HEK293T (cell line): ENCODE measurements at regions of chr1 and their contacts with region 1.

Region 1: DNA sequence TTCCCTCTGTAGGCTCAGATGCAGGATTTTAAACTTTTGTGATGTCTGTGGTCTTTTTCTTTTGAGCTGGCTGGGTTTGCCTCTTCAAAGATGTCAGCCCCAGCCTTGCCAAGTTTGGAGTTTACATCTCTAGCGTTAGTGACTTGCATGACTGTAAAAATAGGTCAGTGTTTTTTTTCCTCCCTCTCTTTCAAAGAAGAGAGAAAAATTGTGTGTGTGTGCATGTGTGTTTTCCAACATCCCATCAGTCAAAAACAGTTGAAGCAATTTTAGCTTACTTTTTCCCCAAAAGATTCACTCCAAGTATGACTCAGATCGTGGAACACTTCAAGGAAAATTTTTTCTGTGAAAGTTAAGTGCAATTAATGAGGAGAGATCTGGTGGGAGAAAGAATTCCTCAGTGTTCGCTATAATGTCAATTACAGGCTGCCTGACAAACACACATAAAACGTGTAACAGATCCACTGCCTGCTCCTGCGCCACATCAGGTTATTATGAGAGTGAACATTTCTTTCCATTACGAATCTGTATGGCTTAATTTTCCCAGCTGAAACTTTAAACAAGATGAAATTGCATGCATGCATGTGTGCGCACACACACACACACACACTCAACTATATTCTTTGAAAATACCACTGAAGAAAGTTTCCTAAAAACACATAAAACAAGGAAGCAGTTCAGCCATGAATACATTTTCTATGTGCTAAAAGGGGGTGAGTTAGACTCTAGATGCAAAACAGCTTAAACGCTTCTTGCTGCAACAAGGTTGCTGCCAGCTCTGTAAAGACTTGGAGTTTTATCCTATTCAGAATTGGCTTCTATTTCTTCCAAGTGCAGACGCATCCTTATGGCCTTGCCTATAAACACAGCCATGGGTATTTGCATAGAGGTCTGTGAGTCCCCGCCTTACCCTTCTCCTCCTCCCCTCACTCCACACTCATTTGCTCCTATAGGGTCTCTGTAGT is 55.5 kb downstream of the TLR5 start:
- DNase-seq: no peak

Region 2: GRCh38 chr1:222643938-222644635 is 443.5 kb before region 1 on chr1:
- CTCF ChIA-PET with region 1: interaction called, 12 read pairs
- POLR2A ChIA-PET with region 1: no interaction called
- DNase-seq: peak; percentile 96

Region 3: DNA sequence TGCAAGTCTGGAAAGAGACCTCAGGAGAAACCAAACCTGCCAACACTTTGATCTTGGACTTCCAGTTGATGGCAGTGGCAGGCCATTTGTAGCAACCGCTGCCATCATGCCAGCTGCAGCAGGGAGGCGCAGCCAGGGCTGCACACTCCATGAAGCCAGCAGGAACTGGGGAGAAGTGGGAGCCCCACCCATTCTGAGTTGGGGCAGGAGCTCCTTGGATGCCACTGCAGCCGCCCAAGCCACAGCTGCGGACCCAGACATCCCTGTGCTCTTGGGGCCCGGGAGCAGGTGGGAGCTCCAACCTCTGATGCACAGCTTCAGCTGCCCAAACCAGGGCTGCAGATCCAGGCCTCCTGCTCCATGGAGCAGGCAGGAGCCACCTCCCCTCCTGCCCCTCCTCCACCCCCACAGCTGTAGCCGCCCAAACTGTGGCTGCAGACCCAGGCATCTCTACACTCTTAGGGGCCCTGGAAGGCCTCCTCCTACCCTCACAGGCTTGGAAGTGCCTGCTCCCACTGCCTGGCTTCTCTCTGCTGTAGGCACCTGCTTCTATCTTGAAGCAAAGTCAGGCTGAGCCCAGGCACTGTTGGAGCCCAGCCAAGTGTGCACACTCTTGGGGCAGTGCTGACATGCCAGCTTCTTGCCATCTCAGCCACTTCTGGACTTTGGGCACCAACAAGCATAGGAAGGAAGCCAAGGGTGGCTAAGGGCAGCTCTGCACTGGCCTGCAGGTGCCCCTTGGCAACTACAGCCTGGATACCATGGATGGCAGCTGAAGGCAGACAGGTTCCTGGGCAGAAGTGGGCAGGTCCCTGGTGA is 292.7 kb before region 1 on chr1:
- CTCF ChIA-PET with region 1: interaction called, 14 read pairs
- POLR2A ChIA-PET with region 1: no interaction called
- DNase-seq: no peak

Region 4: DNA sequence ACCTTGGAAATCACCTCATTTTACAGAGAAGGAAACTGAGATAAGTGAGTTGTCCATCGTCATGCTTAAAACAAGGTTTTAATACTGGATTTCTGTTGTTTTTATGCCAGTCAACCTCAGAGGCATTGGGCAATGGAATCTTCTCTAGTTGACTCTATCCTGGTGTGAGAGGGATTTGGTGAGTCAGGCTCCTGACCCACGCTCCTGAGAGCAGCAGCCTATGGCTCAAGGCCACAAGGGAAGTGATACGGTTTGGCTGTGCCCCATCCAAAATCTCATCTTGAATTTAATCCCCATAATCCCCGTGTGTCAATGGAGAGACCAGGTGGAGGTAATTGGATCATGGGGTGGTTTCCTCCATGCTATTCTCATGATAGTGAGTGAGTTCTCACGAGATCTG is 34.6 kb before region 1 on chr1:
- CTCF ChIA-PET with region 1: no interaction called
- POLR2A ChIA-PET with region 1: no interaction called
- DNase-seq: no peak

Region 5: GRCh38 chr1:223102797-223103533 is 15.4 kb after region 1 on chr1:
- CTCF ChIA-PET with region 1: interaction called, 29 read pairs
- POLR2A ChIA-PET with region 1: no interaction called
- DNase-seq: peak; percentile 30

Region 6: GRCh38 chr1:223133824-223134435 is 46.4 kb after region 1 on chr1:
- CTCF ChIA-PET with region 1: interaction called, 28 read pairs
- POLR2A ChIA-PET with region 1: no interaction called
- DNase-seq: peak; percentile 97